ENCODE measurements at regions of chr1 and their contacts with region 1.

Region 1: GRCh38 chr1:115476616-115477015 is 138.6 kb upstream of the NGF start:
- DNase-seq: no peak
- H3K4me3 ChIP-seq: no peak overlapping the region
- H3K27ac ChIP-seq: no peak overlapping the region
- H3K4me1 ChIP-seq: no peaks in the 10 kb centered on the region
- H3K27me3 ChIP-seq: peaks cover 0 to 28% (median 0%) of the 10 kb centered on the region in 4 donors
- CTCF ChIP-seq: no peak
- EP300 ChIP-seq: no peak
- POLR2A ChIP-seq: no peak

Region 2: DNA sequence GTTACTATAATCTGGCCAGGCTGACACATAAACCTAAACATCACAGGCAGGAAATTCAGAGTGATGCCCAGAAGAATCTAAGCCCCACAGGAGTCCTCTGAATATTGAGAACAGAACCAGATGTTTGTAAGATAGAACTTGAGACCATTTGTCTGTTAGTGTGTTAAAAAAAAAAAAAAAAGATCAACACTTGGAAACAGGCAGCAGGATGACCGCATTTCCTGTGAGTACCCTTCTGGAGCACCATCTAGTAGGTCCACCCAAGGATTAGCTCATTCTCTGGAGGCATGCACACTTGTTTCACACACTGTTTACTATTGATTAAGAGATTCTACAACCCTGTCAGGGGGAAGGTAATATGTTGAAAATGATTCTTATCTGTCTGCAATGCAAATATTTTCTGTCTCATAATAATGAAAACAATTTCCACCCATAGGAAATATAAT is 53.8 kb after region 1 on chr1:
- intact Hi-C with region 1: loop called (anchors 5 kb)
- DNase-seq: no peak
- H3K4me3 ChIP-seq: no peak overlapping the region
- H3K27ac ChIP-seq: no peak overlapping the region
- H3K4me1 ChIP-seq: peaks cover 0 to 3% (median 0%) of the 10 kb centered on the region in 4 donors
- H3K27me3 ChIP-seq: no peaks in the 10 kb centered on the region
- CTCF ChIP-seq: no peak
- EP300 ChIP-seq: no peak
- POLR2A ChIP-seq: no peak

Region 3: DNA sequence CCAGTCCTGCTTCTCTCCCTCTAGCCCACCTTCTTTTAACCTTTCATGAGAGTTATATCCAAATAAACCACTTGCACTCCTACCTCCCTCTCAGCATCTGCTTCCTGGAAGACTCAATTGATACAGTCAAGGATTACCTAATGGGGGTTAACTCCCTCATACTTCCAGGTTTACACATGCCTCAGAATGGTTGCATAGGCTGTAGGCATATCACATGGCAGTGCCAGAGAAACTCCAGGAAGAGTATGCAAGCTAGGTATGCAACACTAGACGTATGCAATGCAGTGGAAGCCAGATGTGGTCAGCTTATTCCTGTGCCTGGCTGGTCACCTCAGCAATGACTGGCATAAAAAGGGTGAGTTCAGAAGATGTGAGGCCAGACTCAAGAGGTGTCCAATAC is 132.4 kb after region 1 on chr1:
- intact Hi-C with region 1: no loop called
- DNase-seq: no peak
- H3K4me3 ChIP-seq: no peak overlapping the region
- H3K27ac ChIP-seq: no peak overlapping the region
- H3K4me1 ChIP-seq: peaks cover 0 to 5% (median 1%) of the 10 kb centered on the region in 4 donors
- H3K27me3 ChIP-seq: no peaks in the 10 kb centered on the region
- CTCF ChIP-seq: no peak
- EP300 ChIP-seq: no peak
- POLR2A ChIP-seq: no peak